ENCODE measurements at regions of chr14 and their contacts with region 1.

Region 1: GRCh38 chr14:21039585-21040369 is 2.4 kb upstream of the RNASE7 start:
- DNase-seq: peak; percentile 63 to 75 (median 72)
- H3K4me3 ChIP-seq: no peak overlapping the region
- H3K27ac ChIP-seq: no peak overlapping the region
- H3K4me1 ChIP-seq: peaks cover 7 to 30% (median 23%) of the 10 kb centered on the region in 4 experiments
- H3K27me3 ChIP-seq: no peaks in the 10 kb centered on the region

Region 2: GRCh38 chr14:20998664-20999366 is 41.0 kb before region 1 on chr14 and contains the start of gene SLC39A2:
- CTCF ChIA-PET with region 1: interaction called, 21 read pairs
- POLR2A ChIA-PET with region 1: no interaction called
- DNase-seq: no peak
- H3K4me3 ChIP-seq: no peak within 1 kb of the TSS
- H3K27ac ChIP-seq: no peak within 1 kb of the TSS
- H3K4me1 ChIP-seq: no peaks in the 10 kb centered on the region
- H3K27me3 ChIP-seq: no peaks in the 10 kb centered on the region

Region 3: GRCh38 chr14:21014761-21015190 is 25.0 kb before region 1 on chr14:
- CTCF ChIA-PET with region 1: interaction called, 345 read pairs
- POLR2A ChIA-PET with region 1: interaction called, 9 read pairs
- DNase-seq: peak; percentile 82 to 90 (median 84)
- H3K4me3 ChIP-seq: no peak overlapping the region
- H3K27ac ChIP-seq: no peak overlapping the region
- H3K4me1 ChIP-seq: peaks cover 0 to 17% (median 4%) of the 10 kb centered on the region in 4 experiments
- H3K27me3 ChIP-seq: peaks cover 0 to 3% (median 0%) of the 10 kb centered on the region in 5 experiments

Region 4: GRCh38 chr14:21057803-21058675 is 18.3 kb after region 1 on chr14 and contains the start of gene RNASE8:
- CTCF ChIA-PET with region 1: interaction called, 12 read pairs
- POLR2A ChIA-PET with region 1: no interaction called
- DNase-seq: peak in 1 of 3 donors; percentile 52
- H3K4me3 ChIP-seq: no peak within 1 kb of the TSS
- H3K27ac ChIP-seq: no peak within 1 kb of the TSS
- H3K4me1 ChIP-seq: no peaks in the 10 kb centered on the region
- H3K27me3 ChIP-seq: peaks cover 0 to 4% (median 0%) of the 10 kb centered on the region in 5 experiments

Region 5: GRCh38 chr14:21071225-21072030 is 31.7 kb after region 1 on chr14:
- CTCF ChIA-PET with region 1: interaction called, 21 read pairs
- POLR2A ChIA-PET with region 1: no interaction called
- DNase-seq: peak; percentile 86 to 94 (median 91)
- H3K4me3 ChIP-seq: peak overlapping the region; percentile 34 to 88 (median 73)
- H3K27ac ChIP-seq: peak overlapping the region; percentile 25 to 73
- H3K4me1 ChIP-seq: peaks cover 8 to 45% (median 42%) of the 10 kb centered on the region in 4 experiments
- H3K27me3 ChIP-seq: peaks cover 0 to 15% (median 6%) of the 10 kb centered on the region in 5 experiments